CD8-positive, alpha-beta T cell (primary cell): ENCODE measurements at regions of chr7 and their contacts with region 1.

Region 1: GRCh38 chr7:128209229-128210035 is 31.6 kb upstream of the LEP start:
- DNase-seq: peak; percentile 45 to 84 (median 65)
- ATAC-seq: peak; percentile 98
- H3K4me3 ChIP-seq: no peak overlapping the region
- H3K4me3 Mint-ChIP-seq: no peak overlapping the region
- H3K27ac ChIP-seq: no peak overlapping the region
- H3K27ac Mint-ChIP-seq: no peak overlapping the region
- H3K4me1 ChIP-seq: no peaks in the 10 kb centered on the region
- H3K4me1 Mint-ChIP-seq: no peaks in the 10 kb centered on the region
- H3K27me3 ChIP-seq: no peaks in the 10 kb centered on the region
- H3K27me3 Mint-ChIP-seq: peaks cover 14% of the 10 kb centered on the region
- CTCF ChIP-seq: peak; percentile 93

Region 2: GRCh38 chr7:126803060-126803665 is 1406.3 kb before region 1 on chr7:
- CTCF ChIA-PET with region 1: no interaction called
- POLR2A ChIA-PET with region 1: no interaction called
- intact Hi-C with region 1: loop called (anchors 5 to 10 kb)
- DNase-seq: peak in 6 of 9 experiments; percentile 0 to 48 (median 16)
- ATAC-seq: no peak
- H3K4me3 ChIP-seq: no peak overlapping the region
- H3K4me3 Mint-ChIP-seq: no peak overlapping the region
- H3K27ac ChIP-seq: no peak overlapping the region
- H3K27ac Mint-ChIP-seq: no peak overlapping the region
- H3K4me1 ChIP-seq: no peaks in the 10 kb centered on the region
- H3K4me1 Mint-ChIP-seq: no peaks in the 10 kb centered on the region
- H3K27me3 ChIP-seq: no peaks in the 10 kb centered on the region
- H3K27me3 Mint-ChIP-seq: peaks cover 4% of the 10 kb centered on the region
- CTCF ChIP-seq: peak; percentile 49

Region 3: DNA sequence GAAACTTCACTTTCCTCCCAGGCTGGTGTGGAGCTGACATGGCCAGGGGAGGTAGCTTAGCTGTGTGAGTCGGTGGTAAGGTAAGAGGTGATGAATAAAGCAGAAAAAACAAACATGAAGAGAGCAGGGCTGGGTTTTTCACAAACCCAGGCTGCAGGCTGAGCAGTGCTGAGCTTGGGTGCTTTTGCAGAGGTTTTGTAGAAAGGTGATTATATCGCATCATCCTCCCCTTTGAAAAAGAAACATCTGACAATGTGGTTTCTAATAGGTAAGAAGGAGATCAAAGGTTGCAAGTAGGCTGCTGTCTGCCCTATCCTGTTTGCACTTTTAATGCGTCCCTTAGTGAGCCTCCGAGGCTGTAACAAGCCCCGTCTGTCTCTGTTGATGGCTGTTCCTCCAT is 887.1 kb before region 1 on chr7:
- CTCF ChIA-PET with region 1: no interaction called
- POLR2A ChIA-PET with region 1: no interaction called
- intact Hi-C with region 1: no loop called
- DNase-seq: peak in 4 of 9 experiments; percentile 2 to 58 (median 26)
- ATAC-seq: peak; percentile 69
- H3K4me3 ChIP-seq: no peak overlapping the region
- H3K4me3 Mint-ChIP-seq: peak overlapping the region; percentile 6
- H3K27ac ChIP-seq: no peak overlapping the region
- H3K27ac Mint-ChIP-seq: no peak overlapping the region
- H3K4me1 ChIP-seq: peaks cover 5% of the 10 kb centered on the region
- H3K4me1 Mint-ChIP-seq: peaks cover 16% of the 10 kb centered on the region
- H3K27me3 ChIP-seq: no peaks in the 10 kb centered on the region
- H3K27me3 Mint-ChIP-seq: peaks cover 2% of the 10 kb centered on the region
- CTCF ChIP-seq: no peak

Region 4: DNA sequence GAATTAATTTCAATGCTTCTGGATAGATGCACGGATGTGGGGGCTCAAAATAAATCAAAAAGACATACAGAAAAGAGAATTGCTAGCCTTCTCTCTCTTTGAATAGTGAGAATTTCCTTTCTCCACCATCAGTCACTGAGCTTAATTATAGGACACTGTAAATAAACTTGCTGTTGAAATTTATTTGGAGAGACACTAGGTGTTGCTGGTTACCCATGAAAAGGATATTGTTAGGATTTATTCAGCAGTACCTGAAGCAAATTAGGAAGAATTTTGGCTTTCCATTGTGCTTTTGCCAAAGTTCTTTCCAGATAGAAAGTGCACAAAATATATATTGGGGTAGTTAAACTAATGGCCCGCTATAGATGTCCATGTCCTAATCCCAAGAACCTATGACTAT is 651.6 kb before region 1 on chr7:
- CTCF ChIA-PET with region 1: interaction called, 5 read pairs
- POLR2A ChIA-PET with region 1: no interaction called
- intact Hi-C with region 1: loop called in 1 of 2 experiments (anchors 2 kb)
- DNase-seq: peak in 1 of 9 experiments; percentile 13
- ATAC-seq: no peak
- H3K4me3 ChIP-seq: no peak overlapping the region
- H3K4me3 Mint-ChIP-seq: no peak overlapping the region
- H3K27ac ChIP-seq: no peak overlapping the region
- H3K27ac Mint-ChIP-seq: no peak overlapping the region
- H3K4me1 ChIP-seq: no peaks in the 10 kb centered on the region
- H3K4me1 Mint-ChIP-seq: no peaks in the 10 kb centered on the region
- H3K27me3 ChIP-seq: no peaks in the 10 kb centered on the region
- H3K27me3 Mint-ChIP-seq: no peaks in the 10 kb centered on the region
- CTCF ChIP-seq: no peak

Region 5: GRCh38 chr7:127673902-127674301 is 535.5 kb before region 1 on chr7:
- CTCF ChIA-PET with region 1: no interaction called
- POLR2A ChIA-PET with region 1: no interaction called
- intact Hi-C with region 1: no loop called
- DNase-seq: no peak
- ATAC-seq: no peak
- H3K4me3 ChIP-seq: no peak overlapping the region
- H3K4me3 Mint-ChIP-seq: no peak overlapping the region
- H3K27ac ChIP-seq: no peak overlapping the region
- H3K27ac Mint-ChIP-seq: peak overlapping the region; percentile 66
- H3K4me1 ChIP-seq: no peaks in the 10 kb centered on the region
- H3K4me1 Mint-ChIP-seq: peaks cover 27% of the 10 kb centered on the region
- H3K27me3 ChIP-seq: no peaks in the 10 kb centered on the region
- H3K27me3 Mint-ChIP-seq: no peaks in the 10 kb centered on the region
- CTCF ChIP-seq: no peak

Region 6: GRCh38 chr7:127708788-127709187 is 500.6 kb before region 1 on chr7:
- CTCF ChIA-PET with region 1: interaction called, 306 read pairs
- POLR2A ChIA-PET with region 1: interaction called, 4 read pairs
- intact Hi-C with region 1: loop called (anchors 1 kb)
- DNase-seq: peak; percentile 47 to 83 (median 75)
- ATAC-seq: peak; percentile 76
- H3K4me3 ChIP-seq: no peak overlapping the region
- H3K4me3 Mint-ChIP-seq: no peak overlapping the region
- H3K27ac ChIP-seq: no peak overlapping the region
- H3K27ac Mint-ChIP-seq: no peak overlapping the region
- H3K4me1 ChIP-seq: no peaks in the 10 kb centered on the region
- H3K4me1 Mint-ChIP-seq: no peaks in the 10 kb centered on the region
- H3K27me3 ChIP-seq: no peaks in the 10 kb centered on the region
- H3K27me3 Mint-ChIP-seq: no peaks in the 10 kb centered on the region
- CTCF ChIP-seq: peak; percentile 60

Region 7: GRCh38 chr7:128031901-128032604 is 177.4 kb before region 1 on chr7:
- CTCF ChIA-PET with region 1: interaction called, 6 read pairs
- POLR2A ChIA-PET with region 1: no interaction called
- intact Hi-C with region 1: loop called (anchors 5 kb)
- DNase-seq: peak; percentile 12 to 79 (median 48)
- ATAC-seq: peak; percentile 94
- H3K4me3 ChIP-seq: peak overlapping the region; percentile 22 to 37
- H3K4me3 Mint-ChIP-seq: peak overlapping the region; percentile 92
- H3K27ac ChIP-seq: no peak overlapping the region
- H3K27ac Mint-ChIP-seq: no peak overlapping the region
- H3K4me1 ChIP-seq: no peaks in the 10 kb centered on the region
- H3K4me1 Mint-ChIP-seq: peaks cover 27% of the 10 kb centered on the region
- H3K27me3 ChIP-seq: peaks cover 0 to 6% of the 10 kb centered on the region in 2 experiments
- H3K27me3 Mint-ChIP-seq: peaks cover 4% of the 10 kb centered on the region
- CTCF ChIP-seq: no peak

Region 8: GRCh38 chr7:128135515-128136214 is 73.8 kb before region 1 on chr7:
- CTCF ChIA-PET with region 1: interaction called, 53 read pairs
- POLR2A ChIA-PET with region 1: interaction called, 3 read pairs
- intact Hi-C with region 1: loop called (anchors 1 kb)
- DNase-seq: peak; percentile 33 to 81 (median 46)
- ATAC-seq: peak; percentile 95
- H3K4me3 ChIP-seq: peak overlapping the region; percentile 62 to 66
- H3K4me3 Mint-ChIP-seq: peak overlapping the region; percentile 82
- H3K27ac ChIP-seq: no peak overlapping the region
- H3K27ac Mint-ChIP-seq: no peak overlapping the region
- H3K4me1 ChIP-seq: peaks cover 14% of the 10 kb centered on the region
- H3K4me1 Mint-ChIP-seq: peaks cover 17% of the 10 kb centered on the region
- H3K27me3 ChIP-seq: peaks cover 0 to 21% of the 10 kb centered on the region in 2 experiments
- H3K27me3 Mint-ChIP-seq: peaks cover 22% of the 10 kb centered on the region
- CTCF ChIP-seq: peak; percentile 91

Region 9: GRCh38 chr7:128259131-128259800 is 49.8 kb after region 1 on chr7:
- CTCF ChIA-PET with region 1: no interaction called
- POLR2A ChIA-PET with region 1: no interaction called
- intact Hi-C with region 1: no loop called
- DNase-seq: no peak
- ATAC-seq: no peak
- H3K4me3 ChIP-seq: no peak overlapping the region
- H3K4me3 Mint-ChIP-seq: no peak overlapping the region
- H3K27ac ChIP-seq: no peak overlapping the region
- H3K27ac Mint-ChIP-seq: no peak overlapping the region
- H3K4me1 ChIP-seq: no peaks in the 10 kb centered on the region
- H3K4me1 Mint-ChIP-seq: no peaks in the 10 kb centered on the region
- H3K27me3 ChIP-seq: no peaks in the 10 kb centered on the region
- H3K27me3 Mint-ChIP-seq: no peaks in the 10 kb centered on the region
- CTCF ChIP-seq: no peak

Region 10: DNA sequence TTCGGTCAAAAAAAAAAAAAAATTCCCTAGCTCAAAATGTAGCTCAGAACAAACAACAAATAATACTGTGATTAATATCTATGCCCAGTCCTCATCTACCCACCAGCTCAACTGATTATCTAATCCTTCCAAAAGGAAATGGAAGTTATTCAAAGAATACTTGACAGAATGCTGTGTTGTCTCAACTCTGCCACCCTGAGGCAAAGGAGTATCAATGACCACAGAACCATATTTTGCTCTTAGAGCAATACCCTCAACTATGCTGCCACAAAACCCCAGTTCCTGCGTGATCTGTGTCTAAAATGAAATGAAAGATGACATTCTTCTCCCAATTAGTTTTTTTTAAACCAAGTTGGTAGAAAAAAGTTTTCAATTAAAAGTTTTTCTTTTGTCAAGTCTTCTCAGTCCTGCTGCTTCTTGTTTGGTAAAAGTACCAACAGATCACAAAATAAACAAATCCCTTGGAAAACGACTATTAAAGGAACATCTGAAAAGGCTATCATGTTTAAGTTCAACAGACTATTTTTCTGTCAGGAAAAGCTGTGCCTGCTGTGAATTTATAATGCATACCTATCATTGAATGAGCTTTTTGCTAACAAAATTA is 112.7 kb after region 1 on chr7:
- CTCF ChIA-PET with region 1: interaction called, 20 read pairs
- POLR2A ChIA-PET with region 1: no interaction called
- intact Hi-C with region 1: no loop called
- DNase-seq: peak in 5 of 9 experiments; percentile 18 to 77 (median 32)
- ATAC-seq: peak; percentile 79
- H3K4me3 ChIP-seq: no peak overlapping the region
- H3K4me3 Mint-ChIP-seq: peak overlapping the region; percentile 36
- H3K27ac ChIP-seq: peak overlapping the region in 1 of 2 experiments; percentile 80
- H3K27ac Mint-ChIP-seq: peak overlapping the region; percentile 91
- H3K4me1 ChIP-seq: peaks cover 39% of the 10 kb centered on the region
- H3K4me1 Mint-ChIP-seq: peaks cover 43% of the 10 kb centered on the region
- H3K27me3 ChIP-seq: no peaks in the 10 kb centered on the region
- H3K27me3 Mint-ChIP-seq: no peaks in the 10 kb centered on the region
- CTCF ChIP-seq: peak; percentile 36